ENCODE measurements at regions of chr1 and their contacts with region 1.

Region 1: GRCh38 chr1:67500413-67500959 is 70.3 kb upstream of the SERBP1 start:
- DNase-seq: peak; percentile 82 to 93 (median 91)
- ATAC-seq: peak; percentile 96 to 97
- H3K4me3 ChIP-seq: no peak overlapping the region
- H3K27ac ChIP-seq: no peak overlapping the region
- H3K4me1 ChIP-seq: no peaks in the 10 kb centered on the region
- H3K27me3 ChIP-seq: no peaks in the 10 kb centered on the region

Region 2: GRCh38 chr1:67214420-67215174 is 285.9 kb before region 1 on chr1:
- intact Hi-C with region 1: loop called in 1 of 4 experiments (anchors 5 kb)
- DNase-seq: no peak
- ATAC-seq: no peak
- H3K4me3 ChIP-seq: no peak overlapping the region
- H3K27ac ChIP-seq: no peak overlapping the region
- H3K4me1 ChIP-seq: no peaks in the 10 kb centered on the region
- H3K27me3 ChIP-seq: no peaks in the 10 kb centered on the region

Region 3: GRCh38 chr1:67227196-67227595 is 273.3 kb before region 1 on chr1:
- intact Hi-C with region 1: loop called in 3 of 4 experiments (anchors 5 to 10 kb)
- DNase-seq: no peak
- ATAC-seq: no peak
- H3K4me3 ChIP-seq: no peak overlapping the region
- H3K27ac ChIP-seq: no peak overlapping the region
- H3K4me1 ChIP-seq: no peaks in the 10 kb centered on the region
- H3K27me3 ChIP-seq: no peaks in the 10 kb centered on the region

Region 4: GRCh38 chr1:67347688-67348472 is 152.6 kb before region 1 on chr1:
- intact Hi-C with region 1: loop called in 3 of 4 experiments (anchors 5 kb)
- DNase-seq: peak in 2 of 3 donors; percentile 16 to 55
- ATAC-seq: peak; percentile 80 to 83
- H3K4me3 ChIP-seq: no peak overlapping the region
- H3K27ac ChIP-seq: no peak overlapping the region
- H3K4me1 ChIP-seq: no peaks in the 10 kb centered on the region
- H3K27me3 ChIP-seq: no peaks in the 10 kb centered on the region

Region 5: DNA sequence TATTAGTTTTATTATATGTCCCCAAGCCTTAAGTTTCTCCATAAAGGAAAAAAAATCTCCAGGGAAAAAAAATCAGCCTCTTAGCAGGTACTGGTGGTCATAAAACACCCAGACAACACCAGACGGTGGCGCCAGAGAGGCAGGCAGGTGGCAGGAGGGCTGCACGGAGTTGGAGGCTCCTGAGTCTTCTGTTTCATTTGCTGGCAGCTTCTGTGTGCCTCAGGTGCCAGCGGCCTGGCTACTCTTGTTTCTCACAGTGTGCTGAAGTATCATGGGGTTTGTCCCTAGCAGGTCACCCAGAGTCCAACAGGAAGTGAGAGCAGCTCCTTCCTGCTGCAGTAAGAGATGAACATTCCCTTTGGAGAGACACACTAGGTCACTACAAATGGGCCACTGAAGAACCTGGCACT is 61.2 kb after region 1 on chr1:
- intact Hi-C with region 1: no loop called
- DNase-seq: peak; percentile 90 to 96 (median 94)
- ATAC-seq: peak; percentile 68 to 78
- H3K4me3 ChIP-seq: no peak overlapping the region
- H3K27ac ChIP-seq: no peak overlapping the region
- H3K4me1 ChIP-seq: peaks cover 5% of the 10 kb centered on the region
- H3K27me3 ChIP-seq: no peaks in the 10 kb centered on the region

Measured in right cardiac atrium (tissue), 5 donors.